A549 (cell line): ENCODE measurements at regions of chr6 and their contacts with region 1.

Region 1: DNA sequence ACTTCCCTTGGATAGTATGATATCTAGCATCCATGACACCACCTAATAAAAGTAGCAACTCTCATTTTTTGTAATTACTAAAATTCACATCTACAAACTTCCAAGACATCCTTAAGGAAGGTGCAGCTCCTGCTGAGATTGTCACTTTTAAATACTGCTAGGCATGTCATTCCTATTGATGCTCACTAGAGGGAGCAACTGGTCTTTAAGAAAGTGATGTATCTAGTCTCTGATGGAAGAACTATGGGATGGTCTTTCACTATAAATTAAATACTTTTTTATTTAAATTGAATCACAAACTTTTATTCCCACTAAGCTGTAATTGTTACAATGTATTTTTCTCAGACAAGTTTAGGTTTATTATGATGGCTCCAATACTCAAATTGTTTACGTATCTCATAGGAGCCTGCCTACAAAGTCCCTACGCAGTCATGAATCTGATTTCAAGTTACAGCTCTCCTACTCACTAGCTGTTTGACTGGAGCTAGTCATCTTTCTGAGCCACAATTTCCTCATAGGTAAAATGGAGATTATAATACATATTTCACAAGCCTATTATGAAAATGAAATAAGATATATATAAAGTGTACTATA is 8.1 kb upstream of the TSPYL1 start:
- DNase-seq: peak in 1 of 2 experiments; percentile 61
- ATAC-seq: peak; percentile 56 to 86; a peak in 4 of 6 replicates
- H3K4me3 ChIP-seq: no peak overlapping the region
- H3K27ac ChIP-seq: no peak overlapping the region
- H3K4me1 ChIP-seq: no peaks in the 10 kb centered on the region
- CTCF ChIP-seq: peak; percentile 81
- EP300 ChIP-seq: no peak
- POLR2A ChIP-seq: no peak
- RAD21 ChIP-seq: peak; percentile 76 to 78

Region 2: DNA sequence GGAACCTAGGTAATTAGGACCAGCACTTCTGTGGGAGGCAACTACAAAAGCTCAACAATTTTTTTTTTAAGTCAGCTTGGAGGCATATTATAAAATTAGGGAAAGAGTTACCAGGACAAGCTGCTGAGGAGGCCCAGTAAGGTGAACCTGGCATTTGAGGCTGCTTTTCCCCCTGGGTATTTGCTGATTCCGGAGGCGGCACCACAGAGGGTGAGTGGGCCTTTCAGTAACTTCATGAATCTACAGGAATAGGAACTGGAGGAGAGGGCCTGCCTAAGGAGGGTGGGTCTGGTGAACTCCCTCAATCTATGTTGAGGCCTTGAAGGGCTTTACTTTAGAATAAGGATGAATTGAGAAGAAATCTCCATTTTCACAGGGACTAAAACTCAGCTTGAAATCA is 48.5 kb before region 1 on chr6:
- CTCF ChIA-PET with region 1: no interaction called
- POLR2A ChIA-PET with region 1: no interaction called
- DNase-seq: no peak
- ATAC-seq: no peak
- H3K4me3 ChIP-seq: no peak overlapping the region
- H3K27ac ChIP-seq: no peak overlapping the region
- H3K4me1 ChIP-seq: no peaks in the 10 kb centered on the region
- CTCF ChIP-seq: no peak
- EP300 ChIP-seq: no peak
- POLR2A ChIP-seq: no peak
- RAD21 ChIP-seq: no peak

Region 3: GRCh38 chr6:116298973-116299372 is 11.2 kb after region 1 on chr6:
- CTCF ChIA-PET with region 1: interaction called, 15 read pairs
- POLR2A ChIA-PET with region 1: no interaction called
- DNase-seq: no peak
- ATAC-seq: no peak
- H3K4me3 ChIP-seq: no peak overlapping the region
- H3K27ac ChIP-seq: no peak overlapping the region
- H3K4me1 ChIP-seq: no peaks in the 10 kb centered on the region
- CTCF ChIP-seq: no peak
- EP300 ChIP-seq: no peak
- POLR2A ChIP-seq: no peak
- RAD21 ChIP-seq: no peak

Region 4: GRCh38 chr6:116369540-116369939 is 81.8 kb after region 1 on chr6:
- CTCF ChIA-PET with region 1: interaction called, 11 read pairs
- POLR2A ChIA-PET with region 1: interaction called, 6 read pairs
- DNase-seq: no peak
- ATAC-seq: no peak
- H3K4me3 ChIP-seq: no peak overlapping the region; the same call in 2 of the 3 replicates
- H3K27ac ChIP-seq: peak overlapping the region in 1 of 2 experiments; percentile 98; a peak in 2 of 6 replicates
- H3K4me1 ChIP-seq: peaks cover 12% of the 10 kb centered on the region
- CTCF ChIP-seq: no peak
- EP300 ChIP-seq: no peak
- POLR2A ChIP-seq: no peak
- RAD21 ChIP-seq: no peak

Region 5: GRCh38 chr6:116531675-116532570 is 244.1 kb after region 1 on chr6:
- CTCF ChIA-PET with region 1: interaction called, 34 read pairs
- POLR2A ChIA-PET with region 1: no interaction called
- DNase-seq: peak; percentile 28 to 65
- ATAC-seq: peak; percentile 76 to 89; a peak in 4 of 6 replicates
- H3K4me3 ChIP-seq: no peak overlapping the region
- H3K27ac ChIP-seq: no peak overlapping the region
- H3K4me1 ChIP-seq: peaks cover 12% of the 10 kb centered on the region
- CTCF ChIP-seq: peak; percentile 67
- EP300 ChIP-seq: no peak
- POLR2A ChIP-seq: no peak
- RAD21 ChIP-seq: peak; percentile 57 to 58